Activated naive CD4-positive, alpha-beta T cell treated with anti-CD3 and anti-CD28 coated beads for 36 hours (primary cell): ENCODE measurements at regions of chr16 and their contacts with region 1.

Region 1: DNA sequence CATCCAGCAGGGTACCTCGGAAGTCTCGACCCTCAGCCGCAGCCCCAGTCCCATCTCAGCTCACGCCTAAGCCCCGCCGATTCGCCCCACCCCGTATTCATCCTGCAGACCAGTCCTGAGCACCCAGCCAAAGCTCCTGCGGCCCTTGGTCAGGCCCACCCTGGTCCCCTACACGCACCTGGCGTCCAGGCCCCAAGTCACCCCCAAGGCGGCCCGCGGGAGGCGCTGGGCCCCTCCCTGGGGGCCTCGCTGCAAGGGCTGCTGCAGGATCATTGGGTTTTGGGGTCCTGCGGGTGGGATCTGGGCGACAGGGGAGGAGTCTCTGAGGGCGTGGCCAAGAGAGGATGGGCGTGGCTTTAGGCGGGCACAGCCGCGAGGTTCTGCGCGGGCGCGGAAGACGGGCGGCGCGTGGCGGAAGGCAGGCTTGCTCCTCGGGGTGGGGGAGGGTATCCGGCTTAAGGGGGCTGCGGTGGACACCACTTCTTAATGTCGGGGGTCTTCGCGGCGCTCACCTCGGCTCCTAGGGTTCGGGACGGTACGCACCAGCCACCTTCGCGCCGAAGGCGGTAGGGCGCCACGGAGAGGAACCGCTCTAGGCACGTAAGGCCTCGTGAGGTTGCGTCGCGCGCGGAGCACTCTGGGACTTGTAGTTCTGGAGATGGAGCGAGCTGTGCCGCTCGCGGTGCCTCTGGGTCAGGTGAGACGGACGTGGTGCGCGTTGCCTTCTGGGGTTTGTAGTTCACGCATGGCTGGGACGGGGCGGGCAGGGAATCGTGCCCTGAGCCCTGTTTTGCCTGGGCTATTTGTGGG is at the starts of genes HCFC1R1 and THOC6:
- DNase-seq: peak; percentile 98
- H3K4me3 Mint-ChIP-seq: peak within 1 kb of the TSS; percentile 95
- H3K27ac Mint-ChIP-seq: peak within 1 kb of the TSS; percentile 98
- H3K4me1 Mint-ChIP-seq: peaks cover 50% of the 10 kb centered on the region
- H3K27me3 Mint-ChIP-seq: peaks cover 6% of the 10 kb centered on the region
- total RNA-seq, gene HCFC1R1: 22.6 to 26.8 TPM
- total RNA-seq, gene THOC6: 40.6 to 41.0 TPM

Region 2: GRCh38 chr16:1300664-1301476 is 1723.0 kb before region 1 on chr16:
- CTCF ChIA-PET with region 1: no interaction called
- intact Hi-C with region 1: no loop called
- DNase-seq: peak; percentile 80
- H3K4me3 Mint-ChIP-seq: no peak overlapping the region
- H3K27ac Mint-ChIP-seq: no peak overlapping the region
- H3K4me1 Mint-ChIP-seq: peaks cover 18% of the 10 kb centered on the region
- H3K27me3 Mint-ChIP-seq: peaks cover 11% of the 10 kb centered on the region

Region 3: GRCh38 chr16:2752035-2752849 is 271.6 kb before region 1 on chr16 and contains the start of gene SRRM2:
- CTCF ChIA-PET with region 1: no interaction called
- intact Hi-C with region 1: loop called (anchors 5 kb)
- DNase-seq: peak; percentile 97
- H3K4me3 Mint-ChIP-seq: peak within 1 kb of the TSS; percentile 87
- H3K27ac Mint-ChIP-seq: peak within 1 kb of the TSS; percentile 99
- H3K4me1 Mint-ChIP-seq: peaks cover 42% of the 10 kb centered on the region
- H3K27me3 Mint-ChIP-seq: no peaks in the 10 kb centered on the region
- total RNA-seq, gene SRRM2: 607 to 649 TPM

Region 4: GRCh38 chr16:2874912-2875362 is 148.9 kb before region 1 on chr16:
- CTCF ChIA-PET with region 1: no interaction called
- intact Hi-C with region 1: no loop called
- DNase-seq: peak; percentile 72
- H3K4me3 Mint-ChIP-seq: no peak overlapping the region
- H3K27ac Mint-ChIP-seq: no peak overlapping the region
- H3K4me1 Mint-ChIP-seq: no peaks in the 10 kb centered on the region
- H3K27me3 Mint-ChIP-seq: no peaks in the 10 kb centered on the region

Region 5: DNA sequence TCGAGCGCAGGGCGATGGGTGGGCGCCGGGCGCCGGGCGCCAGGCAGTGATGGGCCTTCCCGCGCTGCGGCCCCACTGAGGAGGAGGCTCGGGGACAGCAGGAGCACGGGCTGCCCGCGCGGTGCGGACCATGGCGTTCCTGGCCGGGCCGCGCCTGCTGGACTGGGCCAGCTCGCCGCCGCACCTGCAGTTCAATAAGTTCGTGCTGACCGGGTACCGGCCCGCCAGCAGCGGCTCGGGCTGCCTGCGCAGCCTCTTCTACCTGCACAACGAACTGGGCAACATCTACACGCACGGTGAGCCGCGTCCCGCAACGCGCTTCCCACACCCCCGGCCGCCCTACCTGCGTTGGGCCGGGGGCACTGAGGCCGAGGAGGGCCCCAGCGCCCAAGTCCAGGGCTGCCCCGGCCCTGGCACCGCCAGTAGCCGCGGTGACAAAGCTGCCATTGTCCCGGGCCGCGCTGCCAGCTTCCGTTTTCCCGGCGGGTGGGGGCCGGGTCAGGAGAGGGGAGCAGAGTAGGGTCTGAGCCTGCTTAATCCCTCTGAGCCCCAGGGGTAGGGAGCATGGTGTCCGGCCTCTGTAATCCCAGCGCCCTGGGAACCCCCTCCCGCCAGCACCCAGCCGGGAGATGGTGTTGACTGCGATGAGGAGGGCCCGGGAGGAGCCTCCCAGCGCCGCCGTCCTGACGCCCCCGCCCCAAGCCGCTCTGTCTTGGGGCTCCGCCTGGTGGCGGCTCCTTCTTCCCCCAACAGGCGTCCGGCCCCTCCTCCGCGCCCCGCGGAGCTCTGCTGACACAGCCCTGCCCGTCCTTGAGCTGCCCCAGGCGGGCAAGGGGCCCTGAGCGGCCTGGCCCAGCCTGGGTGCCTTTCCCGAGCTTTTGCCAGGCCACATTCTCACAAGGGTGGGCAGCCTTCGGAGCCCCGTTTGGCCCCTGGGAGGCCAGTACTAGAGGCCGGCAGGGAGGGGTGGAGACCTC is 54.0 kb before region 1 on chr16:
- CTCF ChIA-PET with region 1: interaction called, 8 read pairs
- intact Hi-C with region 1: loop called (anchors 2 kb)
- DNase-seq: peak; percentile 87
- H3K4me3 Mint-ChIP-seq: peak overlapping the region; percentile 74
- H3K27ac Mint-ChIP-seq: no peak overlapping the region
- H3K4me1 Mint-ChIP-seq: peaks cover 25% of the 10 kb centered on the region
- H3K27me3 Mint-ChIP-seq: peaks cover 28% of the 10 kb centered on the region

Region 6: DNA sequence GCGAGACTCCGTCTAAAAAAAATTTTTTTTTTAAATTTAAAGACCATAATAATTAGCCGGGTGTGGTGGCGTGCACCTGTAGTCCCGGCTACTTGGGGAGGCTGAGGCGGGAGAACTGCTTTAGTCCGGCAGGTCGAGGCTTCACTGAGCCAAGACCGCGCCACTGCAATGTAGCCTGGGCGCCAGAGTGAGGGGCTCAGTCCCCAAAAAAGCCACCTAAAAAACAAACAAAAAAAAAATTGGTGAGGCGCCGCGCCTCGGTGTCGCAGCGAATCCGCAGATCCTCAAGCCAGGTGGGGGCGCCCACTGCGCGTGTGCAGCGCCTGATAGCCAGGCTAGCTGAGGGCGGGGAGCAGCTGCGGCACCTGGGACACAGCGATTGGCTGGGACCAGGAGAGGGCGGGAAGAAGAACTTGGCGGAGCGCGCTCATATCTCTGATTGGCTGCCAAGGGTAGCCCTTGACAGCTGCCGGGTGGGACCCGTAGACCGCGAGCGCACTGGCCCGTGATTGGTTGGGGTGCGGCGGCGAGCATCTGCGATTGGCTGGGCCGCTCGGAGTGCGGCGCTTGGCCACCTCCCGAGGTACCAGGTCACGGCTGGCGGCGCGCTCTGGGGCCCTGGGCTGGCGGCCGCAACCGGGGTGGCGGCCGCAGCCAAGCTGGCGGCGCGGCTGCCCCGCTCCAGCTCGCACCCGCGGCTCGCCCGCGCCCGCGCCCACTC is 20.1 kb before region 1 on chr16:
- CTCF ChIA-PET with region 1: interaction called, 310 read pairs
- intact Hi-C with region 1: loop called (anchors 1 kb)
- DNase-seq: peak; percentile 98
- H3K4me3 Mint-ChIP-seq: peak overlapping the region; percentile 49
- H3K27ac Mint-ChIP-seq: no peak overlapping the region
- H3K4me1 Mint-ChIP-seq: peaks cover 23% of the 10 kb centered on the region
- H3K27me3 Mint-ChIP-seq: peaks cover 2% of the 10 kb centered on the region

Region 7: DNA sequence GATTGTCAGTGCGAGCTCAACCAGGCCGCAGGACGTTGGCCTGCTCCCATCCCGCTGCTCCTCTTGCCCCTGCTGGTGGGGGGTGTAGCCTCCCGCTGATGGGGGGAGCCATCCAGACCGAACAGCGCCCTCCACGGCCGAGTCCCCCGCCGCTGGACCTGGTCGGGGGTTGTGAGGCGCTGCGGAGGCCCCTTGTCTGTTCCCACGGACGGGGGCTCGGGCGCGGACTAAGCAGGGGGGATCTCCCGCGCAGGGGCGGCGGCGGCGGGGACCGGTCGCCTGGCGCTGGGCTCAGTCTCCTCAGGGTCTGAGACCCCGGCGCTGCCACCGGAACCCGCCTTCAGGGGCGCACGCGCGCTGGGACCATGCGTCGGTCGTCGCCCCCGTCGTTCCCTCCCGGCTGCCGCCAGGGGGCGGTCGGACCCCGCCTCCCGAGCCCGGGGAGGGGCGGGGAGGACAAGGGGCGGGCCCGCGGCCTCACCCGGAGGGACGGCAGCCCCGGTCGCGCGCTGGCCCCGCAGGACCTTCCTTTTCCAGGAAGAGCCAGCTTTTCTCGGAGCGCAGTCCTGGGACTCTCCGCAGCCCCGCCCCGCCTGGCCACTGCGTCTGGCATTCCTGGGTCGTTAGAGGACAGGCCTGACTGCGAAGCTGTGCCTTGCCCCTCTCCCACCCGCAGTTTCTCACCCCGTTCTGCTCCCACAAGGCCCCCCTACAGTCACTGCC is 35.3 kb after region 1 on chr16:
- CTCF ChIA-PET with region 1: interaction called, 14 read pairs
- intact Hi-C with region 1: loop called (anchors 5 kb)
- DNase-seq: peak; percentile 85
- H3K4me3 Mint-ChIP-seq: peak overlapping the region; percentile 89
- H3K27ac Mint-ChIP-seq: peak overlapping the region; percentile 91
- H3K4me1 Mint-ChIP-seq: peaks cover 48% of the 10 kb centered on the region
- H3K27me3 Mint-ChIP-seq: no peaks in the 10 kb centered on the region

Region 8: GRCh38 chr16:3123986-3124886 is 100.4 kb after region 1 on chr16:
- CTCF ChIA-PET with region 1: interaction called, 81 read pairs
- intact Hi-C with region 1: no loop called
- DNase-seq: peak; percentile 98
- H3K4me3 Mint-ChIP-seq: peak overlapping the region; percentile 96
- H3K27ac Mint-ChIP-seq: peak overlapping the region; percentile 89
- H3K4me1 Mint-ChIP-seq: peaks cover 34% of the 10 kb centered on the region
- H3K27me3 Mint-ChIP-seq: no peaks in the 10 kb centered on the region

Region 9: DNA sequence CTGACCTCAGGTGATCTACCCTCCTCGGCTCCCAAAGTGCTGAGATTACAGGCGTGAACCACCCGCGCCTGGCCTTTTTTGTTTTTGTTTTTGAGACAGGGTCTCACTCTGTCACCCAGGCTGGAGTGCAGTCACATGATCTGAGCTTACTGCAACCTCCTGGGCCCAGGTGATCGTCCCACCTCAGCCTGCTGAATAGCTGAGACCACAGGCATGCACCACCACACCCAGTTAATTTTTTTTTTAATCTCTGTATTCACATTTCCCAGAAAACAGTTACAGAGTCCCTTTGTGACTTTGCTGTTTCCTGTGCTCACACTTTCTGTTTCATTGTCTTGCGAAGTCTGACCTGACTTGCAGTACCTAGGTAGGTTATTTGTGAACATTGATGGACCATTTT is 479.6 kb after region 1 on chr16:
- CTCF ChIA-PET with region 1: no interaction called
- intact Hi-C with region 1: loop called (anchors 5 kb)
- DNase-seq: peak; percentile 73
- H3K4me3 Mint-ChIP-seq: peak overlapping the region; percentile 88
- H3K27ac Mint-ChIP-seq: peak overlapping the region; percentile 89
- H3K4me1 Mint-ChIP-seq: peaks cover 68% of the 10 kb centered on the region
- H3K27me3 Mint-ChIP-seq: no peaks in the 10 kb centered on the region